WTC11 (cell line): ENCODE measurements at regions of chr9 and their contacts with region 1.

Region 1: DNA sequence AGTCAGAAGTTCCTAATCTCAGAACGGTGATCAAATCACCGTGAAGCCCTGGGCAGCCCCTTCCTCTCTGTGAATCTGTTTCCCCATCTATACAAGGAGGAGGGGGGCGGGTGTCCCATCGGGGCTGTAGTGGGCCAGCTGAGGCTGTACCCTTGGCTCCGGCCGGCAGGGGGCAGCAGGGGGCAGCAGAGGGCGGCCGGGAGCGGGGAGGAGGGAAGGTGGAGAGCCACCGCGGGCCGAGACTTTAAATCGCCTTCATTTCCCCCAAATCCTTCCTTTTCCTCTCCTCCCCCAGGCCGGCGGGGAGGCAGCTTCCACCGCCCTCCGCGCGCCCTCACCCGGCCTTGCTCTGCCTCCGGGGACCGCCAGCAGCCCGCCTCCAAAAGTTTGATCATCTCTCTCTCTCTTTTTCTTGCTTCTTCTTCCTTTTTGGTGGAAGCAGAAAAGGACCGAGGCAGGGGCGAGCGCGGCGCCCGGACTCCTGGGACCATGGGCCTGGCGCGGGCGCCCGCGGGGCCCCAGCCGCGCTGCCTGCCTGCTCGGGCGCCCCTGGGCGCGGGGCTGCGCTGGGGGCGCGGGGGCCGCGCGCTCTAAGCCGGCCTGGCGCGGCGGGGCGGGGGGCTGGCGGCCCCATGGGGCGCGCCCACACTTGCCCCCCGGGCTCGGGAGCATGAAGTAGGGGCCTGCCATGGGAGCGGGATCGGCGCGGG is at the start of gene COL27A1:
- DNase-seq: peak; percentile 96
- ATAC-seq: peak; percentile 77
- H3K4me3 Mint-ChIP-seq: peak within 1 kb of the TSS; percentile 89
- H3K27ac Mint-ChIP-seq: 0 out of 2 replicates have a peak within 1 kb of the TSS, but pooled peaks have one; percentile 8
- H3K4me1 Mint-ChIP-seq: peaks cover 35% of the 10 kb centered on the region
- H3K27me3 Mint-ChIP-seq: peaks cover 57% of the 10 kb centered on the region
- CTCF ChIP-seq: peak; percentile 89
- total RNA-seq, gene COL27A1: 34.5 to 47.5 TPM (median 36.9 TPM) in 3 replicates

Region 2: GRCh38 chr9:114082017-114082762 is 73.2 kb before region 1 on chr9:
- CTCF ChIA-PET with region 1: interaction called, 11 read pairs
- POLR2A ChIA-PET with region 1: no interaction called
- DNase-seq: peak; percentile 92
- ATAC-seq: peak; percentile 91
- H3K4me3 Mint-ChIP-seq: no peak overlapping the region
- H3K27ac Mint-ChIP-seq: no peak overlapping the region
- H3K4me1 Mint-ChIP-seq: no peaks in the 10 kb centered on the region
- H3K27me3 Mint-ChIP-seq: peaks cover 35% of the 10 kb centered on the region
- CTCF ChIP-seq: peak; percentile 92

Region 3: DNA sequence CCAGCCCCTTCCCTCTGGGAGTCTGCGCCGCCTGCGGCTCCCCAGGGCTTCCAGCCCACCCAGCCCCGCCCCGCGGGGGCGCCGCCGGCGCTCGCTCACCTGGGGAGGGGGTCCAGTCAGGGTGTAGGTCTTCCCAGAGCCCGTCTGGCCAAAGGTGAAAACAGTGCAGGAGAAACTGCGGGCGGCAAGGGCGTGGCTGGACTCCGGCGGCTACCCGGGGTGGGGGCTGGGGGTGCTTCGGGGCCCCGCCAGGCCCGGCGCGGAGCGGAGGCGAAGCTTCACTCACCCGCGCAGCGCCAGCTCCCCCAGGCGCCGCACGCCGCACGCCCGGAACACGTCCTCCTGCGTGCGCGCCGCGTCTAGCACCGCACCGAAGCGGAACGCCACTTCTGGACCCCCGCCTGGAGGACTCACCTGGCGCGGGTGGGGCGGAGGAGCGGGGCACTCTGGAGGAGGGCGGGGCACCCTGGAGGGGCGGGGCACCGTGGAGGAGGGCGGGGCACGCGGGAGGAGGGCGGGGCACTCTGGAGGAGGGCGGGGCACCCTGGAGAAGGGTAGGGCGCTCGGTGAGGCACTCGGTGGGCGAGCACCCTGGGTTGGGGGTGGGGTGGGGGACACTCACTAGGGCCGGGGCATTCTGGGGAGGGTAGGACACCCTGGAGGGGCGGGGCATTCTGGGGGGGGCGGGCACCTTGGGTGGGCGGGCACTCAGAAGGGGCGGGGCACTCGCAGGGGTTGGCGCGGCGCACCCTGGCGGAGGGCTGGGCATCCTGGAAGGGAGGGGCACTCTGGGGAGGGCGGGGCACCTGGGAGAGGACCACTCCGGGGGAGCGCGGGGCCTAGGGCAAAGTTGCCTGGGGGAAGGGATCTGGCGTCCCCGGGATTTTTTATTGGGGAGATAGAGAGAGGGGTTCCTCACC is 57.1 kb before region 1 on chr9:
- CTCF ChIA-PET with region 1: interaction called, 12 read pairs
- POLR2A ChIA-PET with region 1: no interaction called
- DNase-seq: peak; percentile 89
- ATAC-seq: peak; percentile 87
- H3K4me3 Mint-ChIP-seq: peak overlapping the region; percentile 87
- H3K27ac Mint-ChIP-seq: no peak overlapping the region
- H3K4me1 Mint-ChIP-seq: peaks cover 18% of the 10 kb centered on the region
- H3K27me3 Mint-ChIP-seq: peaks cover 70% of the 10 kb centered on the region
- CTCF ChIP-seq: no peak

Region 4: DNA sequence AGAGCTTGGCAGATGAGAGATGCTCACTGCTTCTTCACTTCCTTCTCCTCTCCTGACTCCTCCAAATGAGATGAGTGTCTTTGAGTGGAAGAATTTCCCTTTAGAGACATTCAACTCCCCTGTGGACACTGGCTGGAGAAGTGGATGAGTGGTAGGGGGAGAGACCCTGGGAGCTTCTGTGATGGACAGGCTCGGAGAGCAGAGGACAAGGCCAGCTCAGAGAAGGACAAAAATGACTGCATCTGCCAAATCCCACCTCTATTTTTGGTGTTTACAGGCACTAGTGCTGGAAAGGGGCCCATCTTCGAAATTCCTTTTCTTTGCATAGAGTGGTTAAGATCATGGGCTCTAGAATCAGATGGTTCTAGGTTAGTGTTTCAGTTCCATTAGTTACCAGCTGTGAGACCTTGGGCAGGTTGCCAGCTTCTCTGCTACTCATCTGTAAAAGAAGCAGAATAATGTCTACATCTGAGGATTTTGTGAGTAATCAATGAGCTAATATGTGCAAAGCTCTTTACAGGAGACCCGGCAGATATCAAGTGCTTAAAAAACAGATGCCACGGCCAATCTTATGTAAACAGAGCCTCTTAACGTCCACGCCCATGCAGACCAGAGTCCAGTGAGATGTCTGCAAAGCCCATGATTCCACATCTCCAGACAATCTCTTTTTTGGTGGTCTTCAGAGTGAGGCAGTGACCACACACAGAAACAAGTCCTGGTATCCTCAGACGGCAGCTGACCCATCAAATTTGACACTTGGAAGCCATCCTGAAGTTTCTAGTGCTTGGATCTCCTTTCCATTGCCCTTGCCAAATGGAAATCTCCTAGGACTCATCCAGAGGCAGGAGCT is 13.6 kb before region 1 on chr9:
- CTCF ChIA-PET with region 1: interaction called, 10 read pairs
- POLR2A ChIA-PET with region 1: no interaction called
- DNase-seq: no peak
- ATAC-seq: no peak
- H3K4me3 Mint-ChIP-seq: no peak overlapping the region
- H3K27ac Mint-ChIP-seq: no peak overlapping the region
- H3K4me1 Mint-ChIP-seq: no peaks in the 10 kb centered on the region
- H3K27me3 Mint-ChIP-seq: peaks cover 65% of the 10 kb centered on the region
- CTCF ChIP-seq: no peak

Region 5: GRCh38 chr9:114174876-114175771 is 19.7 kb after region 1 on chr9:
- CTCF ChIA-PET with region 1: interaction called, 12 read pairs
- POLR2A ChIA-PET with region 1: no interaction called
- DNase-seq: no peak
- ATAC-seq: no peak
- H3K4me3 Mint-ChIP-seq: no peak overlapping the region
- H3K27ac Mint-ChIP-seq: 0 out of 2 replicates have a peak overlapping the region, but pooled peaks have one; percentile 36
- H3K4me1 Mint-ChIP-seq: no peaks in the 10 kb centered on the region
- H3K27me3 Mint-ChIP-seq: no peaks in the 10 kb centered on the region
- CTCF ChIP-seq: no peak

Region 6: GRCh38 chr9:114210136-114210535 is 54.7 kb after region 1 on chr9:
- CTCF ChIA-PET with region 1: no interaction called
- POLR2A ChIA-PET with region 1: no interaction called
- DNase-seq: no peak
- ATAC-seq: no peak
- H3K4me3 Mint-ChIP-seq: no peak overlapping the region
- H3K27ac Mint-ChIP-seq: no peak overlapping the region
- H3K4me1 Mint-ChIP-seq: peaks cover 8% of the 10 kb centered on the region
- H3K27me3 Mint-ChIP-seq: no peaks in the 10 kb centered on the region
- CTCF ChIP-seq: no peak

Region 7: GRCh38 chr9:114263853-114264510 is 108.6 kb after region 1 on chr9:
- CTCF ChIA-PET with region 1: interaction called, 14 read pairs
- POLR2A ChIA-PET with region 1: no interaction called
- DNase-seq: peak; percentile 54
- ATAC-seq: peak; percentile 65
- H3K4me3 Mint-ChIP-seq: no peak overlapping the region
- H3K27ac Mint-ChIP-seq: no peak overlapping the region
- H3K4me1 Mint-ChIP-seq: no peaks in the 10 kb centered on the region
- H3K27me3 Mint-ChIP-seq: no peaks in the 10 kb centered on the region
- CTCF ChIP-seq: no peak